A549 (cell line): ENCODE measurements at regions of chr6 and their contacts with region 1.

Region 1: DNA sequence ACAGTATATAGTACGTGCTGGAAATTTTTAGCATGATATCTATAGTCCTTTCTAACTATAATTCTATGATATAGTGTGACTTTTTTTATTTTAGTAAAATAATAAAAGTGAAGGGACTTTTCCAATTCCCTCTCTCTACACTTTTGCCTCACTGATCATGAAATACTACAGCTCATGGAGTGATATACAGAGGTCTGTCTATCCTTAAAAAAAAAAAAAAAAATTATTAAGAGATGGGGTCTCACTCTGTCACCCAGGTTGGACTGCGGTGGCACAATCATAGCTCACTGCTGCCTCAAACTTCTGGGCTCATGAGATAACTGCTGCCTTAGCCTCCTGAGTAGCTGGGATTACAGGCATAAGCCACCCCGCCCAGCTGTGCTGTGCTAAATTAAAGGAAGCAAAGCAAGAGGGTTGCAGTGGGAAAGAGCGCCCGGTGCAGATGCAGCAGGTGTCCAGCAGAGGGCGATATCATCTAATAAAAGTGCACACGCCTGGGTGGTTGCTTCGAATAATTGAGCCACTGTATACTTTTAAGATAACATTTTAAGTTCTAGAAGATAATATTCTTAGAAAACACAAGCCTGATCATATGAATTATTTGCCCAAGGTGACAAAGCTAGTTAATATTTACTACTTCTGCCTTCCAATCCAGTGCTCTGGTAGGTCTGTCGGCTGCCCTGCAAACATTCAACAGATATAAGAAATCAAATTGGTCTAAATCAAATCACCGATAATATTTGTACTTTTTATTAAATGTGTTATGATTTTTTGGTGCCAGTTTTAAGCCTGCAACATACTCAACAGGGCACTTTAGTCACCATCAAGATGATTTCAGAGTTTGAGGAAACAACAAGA is 94.9 kb upstream of the NT5E start:
- DNase-seq: peak; percentile 33 to 59
- ATAC-seq: peak; percentile 91 to 95
- H3K4me3 ChIP-seq: no peak overlapping the region
- H3K27ac ChIP-seq: peak overlapping the region; percentile 41 to 67; a peak in 5 of 6 replicates
- H3K4me1 ChIP-seq: peaks cover 15% of the 10 kb centered on the region
- CTCF ChIP-seq: peak; percentile 88
- EP300 ChIP-seq: no peak
- POLR2A ChIP-seq: no peak
- RAD21 ChIP-seq: peak; percentile 92 to 97

Region 2: DNA sequence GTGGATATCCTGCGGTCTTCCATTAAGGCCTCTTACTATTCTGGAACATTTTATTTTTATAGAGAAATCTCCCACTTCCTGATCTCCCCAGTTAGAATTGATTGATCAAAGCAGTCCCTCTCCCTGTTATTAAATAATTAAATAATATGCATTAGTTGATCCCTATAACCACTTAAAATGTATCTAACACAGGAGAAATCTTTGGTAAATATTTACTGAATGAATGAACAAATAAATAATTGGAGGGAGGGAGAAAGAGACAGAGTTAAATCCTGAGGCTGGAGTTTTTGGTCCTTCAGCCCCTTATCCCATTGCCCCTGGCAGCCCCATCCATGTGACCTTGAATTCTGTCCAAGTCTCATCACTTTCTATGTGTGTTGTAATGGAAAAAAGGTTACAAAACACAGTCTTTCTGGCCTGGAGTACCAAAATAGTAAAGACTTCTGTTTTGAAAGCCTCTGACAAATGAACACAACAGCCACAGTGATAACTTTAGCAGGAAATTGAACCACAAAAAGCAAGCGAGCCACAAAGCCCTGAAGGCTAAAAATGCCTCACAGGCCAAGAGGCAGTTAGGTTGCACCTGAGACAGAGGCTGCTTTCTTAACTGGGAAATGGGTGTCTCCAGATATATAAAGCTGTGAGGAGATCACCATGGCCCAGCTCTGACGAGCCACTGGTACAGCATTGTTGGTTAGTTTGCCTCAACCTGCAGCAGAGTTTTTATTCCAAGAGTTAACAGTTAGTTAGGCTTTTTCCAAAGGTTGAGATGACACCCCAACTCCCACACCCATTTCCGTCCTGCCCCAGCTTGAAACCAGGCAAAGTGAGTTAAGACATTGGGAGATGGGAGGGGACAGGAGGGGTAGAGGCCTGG is 106.2 kb after region 1 on chr6:
- CTCF ChIA-PET with region 1: interaction called, 17 read pairs
- POLR2A ChIA-PET with region 1: no interaction called
- DNase-seq: no peak
- ATAC-seq: no peak
- H3K4me3 ChIP-seq: no peak overlapping the region
- H3K27ac ChIP-seq: peak overlapping the region in 1 of 2 experiments; percentile 85; a peak in 3 of 6 replicates
- H3K4me1 ChIP-seq: peaks cover 84% of the 10 kb centered on the region
- CTCF ChIP-seq: no peak
- EP300 ChIP-seq: no peak
- POLR2A ChIP-seq: no peak
- RAD21 ChIP-seq: no peak

Region 3: DNA sequence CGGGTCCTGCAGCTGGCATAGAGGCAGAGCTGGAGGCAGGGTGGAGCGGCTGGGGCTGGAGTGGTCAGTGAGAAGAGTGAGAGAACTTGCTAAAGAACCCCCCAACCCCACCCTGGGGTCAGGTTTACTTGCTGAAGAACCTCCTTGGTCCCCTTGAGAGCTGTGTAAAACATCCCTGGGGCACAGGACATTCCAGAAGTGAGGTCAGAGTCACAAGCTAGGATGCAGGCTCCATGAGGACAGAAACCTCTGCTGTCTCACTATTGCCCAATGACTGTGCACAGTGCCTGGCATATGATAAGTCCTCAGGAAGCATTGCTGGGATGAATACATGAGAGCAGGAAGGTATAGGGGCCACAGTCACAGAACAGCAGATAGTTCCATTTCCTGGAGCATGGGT is 113.3 kb after region 1 on chr6:
- CTCF ChIA-PET with region 1: interaction called, 17 read pairs
- POLR2A ChIA-PET with region 1: no interaction called
- DNase-seq: no peak
- ATAC-seq: no peak
- H3K4me3 ChIP-seq: no peak overlapping the region
- H3K27ac ChIP-seq: peak overlapping the region in 1 of 2 experiments; percentile 48; a peak in 2 of 6 replicates
- H3K4me1 ChIP-seq: peaks cover 34% of the 10 kb centered on the region
- CTCF ChIP-seq: no peak
- EP300 ChIP-seq: no peak
- POLR2A ChIP-seq: no peak
- RAD21 ChIP-seq: no peak

Region 4: GRCh38 chr6:85490431-85491253 is 135.7 kb after region 1 on chr6:
- CTCF ChIA-PET with region 1: interaction called, 32 read pairs
- POLR2A ChIA-PET with region 1: no interaction called
- DNase-seq: no peak
- ATAC-seq: no peak
- H3K4me3 ChIP-seq: no peak overlapping the region
- H3K27ac ChIP-seq: no peak overlapping the region
- H3K4me1 ChIP-seq: no peaks in the 10 kb centered on the region
- CTCF ChIP-seq: no peak
- EP300 ChIP-seq: no peak
- POLR2A ChIP-seq: no peak
- RAD21 ChIP-seq: no peak